ENCODE measurements at regions of chr17 and their contacts with region 1.

Region 1: GRCh38 chr17:28896884-28897768 is at the start of gene FLOT2:
- DNase-seq: peak; percentile 66 to 89 (median 80)
- H3K4me3 ChIP-seq: peak within 1 kb of the TSS; percentile 3 to 96 (median 95)
- H3K27ac ChIP-seq: peak within 1 kb of the TSS; percentile 76 to 98 (median 95)
- H3K4me1 ChIP-seq: peaks cover 7 to 49% of the 10 kb centered on the region in 2 donors
- H3K27me3 ChIP-seq: no peaks in the 10 kb centered on the region
- CTCF ChIP-seq: peak in 5 of 6 experiments; percentile 9 to 44 (median 14)
- POLR2A ChIP-seq: peak; percentile 25 to 41
- total RNA-seq, gene FLOT2: 23.8 to 193 (median 85.3) TPM

Region 2: GRCh38 chr17:28763804-28764266 is 133.3 kb before region 1 on chr17:
- intact Hi-C with region 1: loop called in 1 of 2 experiments (anchors 5 kb)
- DNase-seq: peak; percentile 83 to 96 (median 89)
- H3K4me3 ChIP-seq: no peak overlapping the region
- H3K27ac ChIP-seq: peak overlapping the region in 1 of 5 donors; percentile 24
- H3K4me1 ChIP-seq: peaks cover 0 to 5% of the 10 kb centered on the region in 2 donors
- H3K27me3 ChIP-seq: no peaks in the 10 kb centered on the region
- CTCF ChIP-seq: peak; percentile 81 to 97 (median 87)
- POLR2A ChIP-seq: no peak

Region 3: GRCh38 chr17:28828294-28829040 is 68.7 kb before region 1 on chr17:
- intact Hi-C with region 1: no loop called
- DNase-seq: peak in 1 of 7 donors; percentile 21
- H3K4me3 ChIP-seq: no peak overlapping the region
- H3K27ac ChIP-seq: no peak overlapping the region
- H3K4me1 ChIP-seq: no peaks in the 10 kb centered on the region
- H3K27me3 ChIP-seq: no peaks in the 10 kb centered on the region
- CTCF ChIP-seq: no peak
- POLR2A ChIP-seq: no peak

Region 4: GRCh38 chr17:28864991-28865849 is 31.9 kb before region 1 on chr17:
- intact Hi-C with region 1: loop called in 1 of 2 experiments (anchors 5 kb)
- DNase-seq: no peak
- H3K4me3 ChIP-seq: no peak overlapping the region
- H3K27ac ChIP-seq: no peak overlapping the region
- H3K4me1 ChIP-seq: no peaks in the 10 kb centered on the region
- H3K27me3 ChIP-seq: no peaks in the 10 kb centered on the region
- CTCF ChIP-seq: no peak
- POLR2A ChIP-seq: no peak

Measured in adrenal gland (tissue), 19 donors.